Transverse colon (tissue), 4 donors: ENCODE measurements at regions of chr9 and their contacts with region 1.

Region 1: GRCh38 chr9:110370316-110370715 is 32.7 kb upstream of the TXNDC8 start:
- DNase-seq: no peak
- H3K4me3 ChIP-seq: no peak overlapping the region
- H3K27ac ChIP-seq: no peak overlapping the region
- H3K4me1 ChIP-seq: no peaks in the 10 kb centered on the region
- H3K27me3 ChIP-seq: no peaks in the 10 kb centered on the region
- CTCF ChIP-seq: no peak
- EP300 ChIP-seq: no peak
- POLR2A ChIP-seq: no peak

Region 2: GRCh38 chr9:111588846-111589245 is 1218.5 kb after region 1 on chr9:
- in situ Hi-C with region 1: no loop called
- intact Hi-C with region 1: loop called (anchors 5 kb)
- DNase-seq: no peak
- H3K4me3 ChIP-seq: no peak overlapping the region
- H3K27ac ChIP-seq: no peak overlapping the region
- H3K4me1 ChIP-seq: no peaks in the 10 kb centered on the region
- H3K27me3 ChIP-seq: no peaks in the 10 kb centered on the region
- CTCF ChIP-seq: no peak
- EP300 ChIP-seq: no peak
- POLR2A ChIP-seq: no peak